ENCODE measurements at regions of chr1 and their contacts with region 1.

Region 1: GRCh38 chr1:212665241-212666115 is 34.2 kb downstream of the BATF3 start:
- DNase-seq: peak; percentile 51
- ATAC-seq: peak; percentile 98
- H3K4me3 ChIP-seq: peak overlapping the region; percentile 66 to 85 (median 70)
- H3K27ac ChIP-seq: no peak overlapping the region
- H3K4me1 ChIP-seq: peaks cover 34% of the 10 kb centered on the region
- H3K27me3 ChIP-seq: peaks cover 2 to 26% of the 10 kb centered on the region in 2 experiments; a peak in 4 of 5 replicates
- CTCF ChIP-seq: peak; percentile 99
- EP300 ChIP-seq: no peak
- POLR2A ChIP-seq: no peak
- RAD21 ChIP-seq: peak; percentile 96

Region 2: GRCh38 chr1:212518188-212519054 is 147.1 kb before region 1 on chr1:
- CTCF ChIA-PET with region 1: no interaction called
- POLR2A ChIA-PET with region 1: no interaction called
- in situ Hi-C with region 1: no loop called
- intact Hi-C with region 1: no loop called
- DNase-seq: peak; percentile 74
- ATAC-seq: peak; percentile 95
- H3K4me3 ChIP-seq: peak overlapping the region in 1 of 3 experiments; percentile 24; a peak in 2 of 6 replicates
- H3K27ac ChIP-seq: no peak overlapping the region
- H3K4me1 ChIP-seq: peaks cover 22% of the 10 kb centered on the region
- H3K27me3 ChIP-seq: peaks cover 0 to 10% of the 10 kb centered on the region in 2 experiments; a peak in 1 of 5 replicates
- CTCF ChIP-seq: no peak
- EP300 ChIP-seq: no peak; a peak in 1 of 4 replicates
- POLR2A ChIP-seq: 0 out of 4 replicates have a peak, but pooled peaks of 1 of the 2 experiments have one; percentile 39
- RAD21 ChIP-seq: no peak

Region 3: DNA sequence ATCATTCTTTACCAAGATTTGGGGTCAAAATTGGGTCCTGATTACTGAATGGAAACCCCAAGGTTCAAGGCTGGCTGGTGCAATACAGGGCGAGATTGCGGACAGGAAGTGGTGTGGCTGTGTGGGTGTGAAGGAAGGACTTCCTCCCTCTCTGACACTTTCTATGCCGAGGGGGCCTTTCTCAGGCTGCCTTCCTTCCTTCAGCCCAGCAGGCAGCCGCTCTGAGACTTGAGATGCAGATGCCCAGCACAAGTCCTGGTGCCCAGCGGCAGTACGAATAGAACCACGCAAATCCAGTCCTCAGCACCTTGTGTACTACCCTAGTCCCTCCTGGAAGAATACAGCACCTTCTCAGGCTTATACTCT is 17.9 kb after region 1 on chr1:
- CTCF ChIA-PET with region 1: no interaction called
- POLR2A ChIA-PET with region 1: no interaction called
- in situ Hi-C with region 1: no loop called
- intact Hi-C with region 1: no loop called
- DNase-seq: no peak
- ATAC-seq: no peak
- H3K4me3 ChIP-seq: no peak overlapping the region
- H3K27ac ChIP-seq: no peak overlapping the region
- H3K4me1 ChIP-seq: peaks cover 10% of the 10 kb centered on the region
- H3K27me3 ChIP-seq: peaks cover under 1 to 54% of the 10 kb centered on the region in 2 experiments; a peak in 4 of 5 replicates
- CTCF ChIP-seq: no peak
- EP300 ChIP-seq: no peak
- POLR2A ChIP-seq: no peak
- RAD21 ChIP-seq: no peak

Region 4: DNA sequence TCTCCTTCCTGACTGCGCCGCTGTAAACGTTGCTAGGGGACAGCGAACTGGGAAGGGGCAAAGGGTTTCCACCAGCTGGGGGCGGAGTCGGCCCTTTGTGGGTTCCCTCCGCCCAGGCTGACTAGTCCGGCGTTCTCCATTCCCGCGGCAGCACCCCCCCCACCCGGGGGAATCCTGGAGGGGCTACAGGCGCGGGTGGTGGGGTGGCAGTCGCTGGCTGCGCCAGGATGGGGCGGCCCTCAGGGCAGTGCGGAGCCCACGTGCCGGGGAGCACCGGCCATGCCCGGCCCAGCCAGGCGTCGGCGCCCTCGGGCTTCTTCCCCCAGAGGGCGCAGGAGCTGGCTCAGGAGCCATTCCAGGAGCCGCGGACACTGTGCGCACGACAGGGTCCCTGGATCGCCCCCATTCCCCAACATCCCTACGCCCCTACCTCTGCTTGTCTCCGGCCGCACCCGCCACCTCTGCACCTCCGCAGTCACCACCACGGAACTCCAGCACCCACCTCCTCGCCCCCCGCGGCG is 33.7 kb after region 1 on chr1:
- CTCF ChIA-PET with region 1: no interaction called
- POLR2A ChIA-PET with region 1: no interaction called
- in situ Hi-C with region 1: no loop called
- intact Hi-C with region 1: loop called (anchors 2 kb)
- DNase-seq: peak; percentile 16
- ATAC-seq: peak; percentile 89
- H3K4me3 ChIP-seq: peak overlapping the region; percentile 45 to 72 (median 62)
- H3K27ac ChIP-seq: no peak overlapping the region
- H3K4me1 ChIP-seq: peaks cover 31% of the 10 kb centered on the region
- H3K27me3 ChIP-seq: peaks cover 16 to 73% of the 10 kb centered on the region in 2 experiments
- CTCF ChIP-seq: peak; percentile 68
- EP300 ChIP-seq: no peak
- POLR2A ChIP-seq: no peak
- RAD21 ChIP-seq: peak; percentile 58; the same call in 1 of the 2 replicates

Region 5: DNA sequence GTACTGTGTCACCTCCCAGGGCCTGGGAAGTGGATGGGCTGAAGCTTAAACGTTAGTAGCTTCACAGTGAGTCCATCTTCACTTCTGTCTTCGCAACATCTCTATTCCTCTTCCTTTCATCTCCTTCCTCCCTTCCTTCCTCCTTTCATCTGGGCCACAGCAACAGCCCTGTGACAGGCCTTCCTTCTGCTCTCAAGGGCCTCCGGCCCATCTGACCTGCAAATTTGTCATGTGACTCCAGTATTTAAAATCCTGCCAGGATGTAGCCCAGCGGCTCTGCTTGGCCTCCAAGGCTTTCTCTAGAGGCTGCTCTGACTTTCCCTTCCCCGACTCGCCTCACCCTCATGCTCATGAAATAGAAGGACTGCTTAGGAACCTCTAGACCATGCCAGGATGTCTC is 45.1 kb after region 1 on chr1:
- CTCF ChIA-PET with region 1: no interaction called
- POLR2A ChIA-PET with region 1: no interaction called
- in situ Hi-C with region 1: no loop called
- intact Hi-C with region 1: no loop called
- DNase-seq: no peak
- ATAC-seq: no peak
- H3K4me3 ChIP-seq: no peak overlapping the region
- H3K27ac ChIP-seq: no peak overlapping the region
- H3K4me1 ChIP-seq: no peaks in the 10 kb centered on the region
- H3K27me3 ChIP-seq: peaks cover 0 to 19% of the 10 kb centered on the region in 2 experiments; a peak in 2 of 5 replicates
- CTCF ChIP-seq: no peak
- EP300 ChIP-seq: no peak
- POLR2A ChIP-seq: no peak
- RAD21 ChIP-seq: no peak

Region 6: GRCh38 chr1:212782422-212783154 is 117.1 kb after region 1 on chr1:
- CTCF ChIA-PET with region 1: interaction called, 31 read pairs
- POLR2A ChIA-PET with region 1: no interaction called
- in situ Hi-C with region 1: loop called (anchors 5 kb)
- intact Hi-C with region 1: loop called (anchors 1 kb)
- DNase-seq: peak; percentile 3
- ATAC-seq: no peak
- H3K4me3 ChIP-seq: no peak overlapping the region
- H3K27ac ChIP-seq: no peak overlapping the region
- H3K4me1 ChIP-seq: peaks cover 10% of the 10 kb centered on the region; the same call in 1 of the 2 replicates
- H3K27me3 ChIP-seq: no peaks in the 10 kb centered on the region; a peak in 1 of 5 replicates
- CTCF ChIP-seq: peak; percentile 62
- EP300 ChIP-seq: no peak
- POLR2A ChIP-seq: no peak
- RAD21 ChIP-seq: peak; percentile 15; the same call in 1 of the 2 replicates

Region 7: DNA sequence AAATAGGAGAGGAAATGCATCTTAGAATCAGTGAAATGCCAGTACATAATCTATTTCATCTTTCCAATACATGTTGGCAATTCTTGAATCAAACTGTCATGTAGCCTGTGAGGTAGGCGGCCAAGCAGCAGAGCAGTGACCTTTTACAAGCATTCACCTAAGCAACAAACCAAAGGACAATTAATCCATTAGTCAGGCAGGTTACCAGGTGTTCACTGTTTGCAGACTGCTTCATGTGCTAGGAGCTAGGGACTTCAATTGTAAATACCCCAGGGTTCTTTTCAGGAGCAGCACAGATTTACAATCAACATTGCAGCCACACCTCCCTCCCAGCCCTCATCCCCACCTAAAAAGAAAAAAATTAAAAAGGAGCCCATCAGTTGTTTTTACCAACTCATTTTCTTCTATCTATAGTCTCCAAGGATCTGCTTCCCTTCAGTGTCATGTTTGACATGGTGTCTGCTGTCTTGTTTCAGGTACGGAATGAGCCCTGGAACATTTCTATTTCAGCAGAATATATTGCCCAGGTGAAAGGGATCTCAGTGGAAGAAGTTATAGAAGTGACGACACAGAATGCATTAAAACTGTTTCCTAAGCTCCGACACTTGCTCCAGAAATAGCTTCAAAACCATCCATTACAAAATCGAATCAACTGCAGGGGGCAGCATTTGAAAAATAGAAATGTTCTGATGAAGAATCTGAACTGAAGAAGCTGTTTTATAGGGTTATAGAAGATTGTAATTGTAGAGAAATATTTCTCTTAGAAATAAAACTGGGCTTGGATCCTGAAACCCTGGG is 149.3 kb after region 1 on chr1:
- CTCF ChIA-PET with region 1: no interaction called
- POLR2A ChIA-PET with region 1: no interaction called
- in situ Hi-C with region 1: no loop called
- intact Hi-C with region 1: no loop called
- DNase-seq: peak; percentile 25
- ATAC-seq: no peak
- H3K4me3 ChIP-seq: no peak overlapping the region
- H3K27ac ChIP-seq: no peak overlapping the region
- H3K4me1 ChIP-seq: peaks cover 41% of the 10 kb centered on the region
- H3K27me3 ChIP-seq: no peaks in the 10 kb centered on the region
- CTCF ChIP-seq: peak; percentile 44
- EP300 ChIP-seq: no peak
- POLR2A ChIP-seq: no peak
- RAD21 ChIP-seq: no peak

Region 8: DNA sequence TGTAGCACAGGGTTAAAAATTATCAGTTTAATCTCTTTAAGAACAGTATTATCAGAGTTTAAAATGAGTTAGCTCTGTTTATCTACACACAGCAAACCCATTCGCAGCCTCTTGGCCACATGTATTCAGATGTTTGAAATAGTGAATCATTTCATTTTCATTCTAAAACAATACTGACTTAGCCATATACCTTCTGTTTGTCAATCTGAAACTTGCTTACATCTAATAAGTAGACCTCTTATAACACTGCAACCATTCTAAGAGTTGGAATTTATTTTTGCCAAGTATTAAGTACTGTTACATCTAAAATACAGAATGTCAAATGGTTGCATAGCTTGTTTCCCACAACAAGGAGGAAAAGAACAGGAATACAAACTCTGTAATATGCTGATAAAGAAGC is 324.8 kb after region 1 on chr1:
- CTCF ChIA-PET with region 1: interaction called, 8 read pairs
- POLR2A ChIA-PET with region 1: no interaction called
- in situ Hi-C with region 1: no loop called
- intact Hi-C with region 1: loop called (anchors 5 kb)
- DNase-seq: no peak
- ATAC-seq: no peak
- H3K4me3 ChIP-seq: no peak overlapping the region
- H3K27ac ChIP-seq: no peak overlapping the region
- H3K4me1 ChIP-seq: peaks cover 7% of the 10 kb centered on the region; the same call in 1 of the 2 replicates
- H3K27me3 ChIP-seq: no peaks in the 10 kb centered on the region
- CTCF ChIP-seq: no peak
- EP300 ChIP-seq: no peak
- POLR2A ChIP-seq: no peak
- RAD21 ChIP-seq: no peak